ENCODE measurements at regions of chr11 and their contacts with region 1.

Region 1: DNA sequence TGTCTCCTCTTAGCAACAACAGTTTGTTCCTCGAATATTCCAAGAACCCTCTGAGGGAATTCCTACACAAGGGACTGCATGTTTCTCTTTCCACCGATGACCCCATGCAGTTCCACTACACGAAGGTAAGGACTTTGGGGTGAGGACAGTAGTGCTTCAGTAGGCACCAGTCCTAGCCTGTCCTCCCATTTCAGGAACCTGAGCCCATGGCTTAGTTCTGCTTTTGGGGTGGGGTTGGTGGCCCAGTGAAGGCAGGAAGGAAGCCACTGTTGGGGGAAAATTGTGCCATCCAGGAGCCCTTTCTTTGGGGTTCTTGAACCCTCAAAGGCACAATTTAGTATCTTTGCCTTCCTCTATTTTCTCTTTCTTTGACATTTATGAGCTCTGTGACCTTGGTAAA is 38.2 kb downstream of the RNF141 start:
- DNase-seq: peak in 2 of 14 experiments; percentile 29 to 33
- ATAC-seq: no peak
- H3K4me3 ChIP-seq: no peak overlapping the region
- H3K4me3 Mint-ChIP-seq: no peak overlapping the region
- H3K27ac ChIP-seq: no peak overlapping the region
- H3K27ac Mint-ChIP-seq: peak overlapping the region; percentile 22
- H3K4me1 ChIP-seq: no peaks in the 10 kb centered on the region
- H3K4me1 Mint-ChIP-seq: no peaks in the 10 kb centered on the region
- H3K27me3 ChIP-seq: no peaks in the 10 kb centered on the region
- H3K27me3 Mint-ChIP-seq: no peaks in the 10 kb centered on the region
- CTCF ChIP-seq: no peak

Region 2: DNA sequence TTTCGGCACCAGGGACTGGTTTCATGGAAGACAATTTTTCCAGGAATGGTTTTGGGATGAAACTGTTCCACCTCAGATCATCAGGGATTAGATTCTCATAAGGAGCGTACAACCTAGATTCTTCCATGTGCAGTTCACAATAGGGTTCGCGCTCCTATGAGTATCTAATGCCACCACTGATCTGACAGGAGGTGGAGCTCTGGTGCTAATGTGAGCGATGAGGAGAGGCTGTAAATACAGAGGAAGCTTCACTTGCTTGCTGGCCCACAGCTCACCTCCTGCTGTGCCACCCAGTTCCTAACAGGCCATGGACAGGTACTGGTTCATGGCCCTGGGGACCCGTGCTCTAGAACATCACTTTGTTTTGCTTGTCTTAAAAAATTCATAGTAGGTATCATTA is 89.5 kb before region 1 on chr11:
- CTCF ChIA-PET with region 1: interaction called, 4 read pairs
- POLR2A ChIA-PET with region 1: no interaction called
- intact Hi-C with region 1: loop called in 1 of 2 experiments (anchors 5 kb)
- DNase-seq: peak; percentile 20 to 78 (median 44)
- ATAC-seq: peak; percentile 92
- H3K4me3 ChIP-seq: no peak overlapping the region
- H3K4me3 Mint-ChIP-seq: no peak overlapping the region
- H3K27ac ChIP-seq: no peak overlapping the region
- H3K27ac Mint-ChIP-seq: no peak overlapping the region
- H3K4me1 ChIP-seq: peaks cover 32% of the 10 kb centered on the region
- H3K4me1 Mint-ChIP-seq: peaks cover 50% of the 10 kb centered on the region
- H3K27me3 ChIP-seq: no peaks in the 10 kb centered on the region
- H3K27me3 Mint-ChIP-seq: no peaks in the 10 kb centered on the region
- CTCF ChIP-seq: peak; percentile 61

Region 3: GRCh38 chr11:10478574-10479550 is 23.9 kb before region 1 on chr11:
- CTCF ChIA-PET with region 1: no interaction called
- POLR2A ChIA-PET with region 1: no interaction called
- intact Hi-C with region 1: no loop called
- DNase-seq: peak in 1 of 14 experiments; percentile 19
- ATAC-seq: no peak
- H3K4me3 ChIP-seq: no peak overlapping the region
- H3K4me3 Mint-ChIP-seq: no peak overlapping the region
- H3K27ac ChIP-seq: no peak overlapping the region
- H3K27ac Mint-ChIP-seq: peak overlapping the region; percentile 57
- H3K4me1 ChIP-seq: peaks cover 9% of the 10 kb centered on the region
- H3K4me1 Mint-ChIP-seq: peaks cover 29% of the 10 kb centered on the region
- H3K27me3 ChIP-seq: no peaks in the 10 kb centered on the region
- H3K27me3 Mint-ChIP-seq: no peaks in the 10 kb centered on the region
- CTCF ChIP-seq: no peak